Mammary epithelial cell (primary cell): ENCODE measurements at regions of chr1 and their contacts with region 1.

Region 1: DNA sequence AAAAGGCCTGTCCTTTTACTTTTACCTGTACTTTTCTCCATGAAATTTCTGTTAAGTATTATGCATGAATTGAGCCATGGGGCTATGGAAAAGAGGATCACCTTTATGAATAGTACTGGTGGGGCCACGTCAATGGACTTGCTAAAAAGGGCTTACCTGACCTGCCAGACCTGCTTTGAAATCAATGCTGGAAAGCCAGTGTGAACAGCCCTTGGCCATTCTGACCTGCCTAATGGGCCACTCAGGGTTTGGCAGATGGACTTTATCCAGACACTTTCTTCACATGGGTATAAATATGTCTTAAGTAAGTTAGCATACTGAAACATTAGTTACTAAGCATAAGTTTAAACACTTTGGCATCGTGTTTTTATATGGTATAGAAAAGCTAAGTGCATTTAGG is 8.3 kb upstream of the GUK1 start:
- DNase-seq: no peak
- H3K4me3 ChIP-seq: no peak overlapping the region
- H3K27ac ChIP-seq: peak overlapping the region; percentile 9
- H3K4me1 ChIP-seq: peaks cover 11% of the 10 kb centered on the region
- H3K27me3 ChIP-seq: no peaks in the 10 kb centered on the region
- CTCF ChIP-seq: no peak

Region 2: GRCh38 chr1:228109073-228109961 is 22.4 kb before region 1 on chr1 and contains the start of gene MRPL55:
- CTCF ChIA-PET with region 1: interaction called, 5 read pairs
- dilution Hi-C with region 1: no loop called
- in situ Hi-C with region 1: no loop called
- intact Hi-C with region 1: loop called (anchors 1 kb)
- DNase-seq: peak; percentile 95
- H3K4me3 ChIP-seq: peak within 1 kb of the TSS; percentile 73 to 99 (median 80)
- H3K27ac ChIP-seq: peak within 1 kb of the TSS; percentile 66
- H3K4me1 ChIP-seq: peaks cover 14% of the 10 kb centered on the region
- H3K27me3 ChIP-seq: no peaks in the 10 kb centered on the region
- CTCF ChIP-seq: peak in 1 of 2 donors; percentile 10
- total RNA-seq, gene MRPL55: 37.7 to 42.3 TPM

Region 3: DNA sequence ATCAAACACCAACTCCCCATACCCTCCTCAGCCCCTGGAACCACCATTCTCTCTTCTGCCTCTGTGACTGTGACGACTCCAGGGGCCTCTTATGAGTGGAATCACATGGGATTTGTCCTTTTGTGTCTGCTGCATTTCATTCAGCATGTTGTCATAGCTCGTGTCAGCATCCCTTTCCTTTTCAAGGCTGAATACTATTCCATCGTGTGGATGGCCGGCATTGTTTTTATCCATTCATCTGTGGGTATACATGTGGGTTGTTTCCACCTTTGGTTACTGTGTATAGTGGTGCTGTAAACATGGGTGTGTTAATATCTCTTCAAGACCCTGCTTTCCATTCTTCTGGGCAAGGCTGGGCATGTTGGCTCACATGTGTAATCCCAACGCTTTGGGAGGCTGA is 59.0 kb after region 1 on chr1:
- CTCF ChIA-PET with region 1: no interaction called
- dilution Hi-C with region 1: no loop called
- in situ Hi-C with region 1: no loop called
- intact Hi-C with region 1: loop called (anchors 1 kb)
- DNase-seq: no peak
- H3K4me3 ChIP-seq: no peak overlapping the region
- H3K27ac ChIP-seq: no peak overlapping the region
- H3K4me1 ChIP-seq: no peaks in the 10 kb centered on the region
- H3K27me3 ChIP-seq: no peaks in the 10 kb centered on the region
- CTCF ChIP-seq: no peak

Region 4: DNA sequence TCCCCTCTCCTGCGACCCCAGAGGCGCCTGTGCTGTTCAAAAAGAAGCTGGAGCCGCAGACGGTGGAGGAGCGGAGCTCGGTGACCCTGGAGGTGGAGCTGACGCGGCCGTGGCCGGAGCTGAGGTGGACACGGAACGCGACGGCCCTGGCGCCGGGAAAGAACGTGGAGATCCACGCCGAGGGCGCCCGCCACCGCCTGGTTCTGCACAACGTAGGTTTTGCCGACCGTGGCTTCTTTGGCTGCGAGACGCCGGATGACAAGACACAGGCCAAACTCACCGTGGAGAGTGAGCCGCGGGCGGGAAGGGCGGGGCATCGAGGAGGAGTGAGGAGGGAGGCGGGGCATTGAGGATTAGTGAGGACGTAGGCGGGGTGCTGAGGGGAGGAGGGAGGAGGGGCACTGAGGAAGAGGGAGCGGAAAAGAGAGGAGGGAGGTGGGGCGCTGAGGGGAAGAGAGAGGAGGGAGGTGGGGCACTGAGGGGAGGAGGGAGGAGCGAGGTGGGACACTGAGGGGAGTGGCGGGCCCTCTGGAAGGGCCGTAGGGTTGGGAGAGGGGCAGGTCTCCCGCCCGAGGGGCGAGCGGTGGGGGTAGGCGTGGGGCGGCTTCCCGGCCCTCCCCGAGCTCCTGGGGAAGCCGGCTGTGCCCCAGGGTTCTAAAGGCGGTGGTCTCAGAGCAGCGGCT is 144.1 kb after region 1 on chr1:
- CTCF ChIA-PET with region 1: no interaction called
- dilution Hi-C with region 1: no loop called
- in situ Hi-C with region 1: no loop called
- intact Hi-C with region 1: loop called (anchors 2 kb)
- DNase-seq: peak; percentile 63
- H3K4me3 ChIP-seq: peak overlapping the region; percentile 21 to 58 (median 54)
- H3K27ac ChIP-seq: no peak overlapping the region
- H3K4me1 ChIP-seq: peaks cover 9% of the 10 kb centered on the region
- H3K27me3 ChIP-seq: no peaks in the 10 kb centered on the region
- CTCF ChIP-seq: no peak

Region 5: GRCh38 chr1:228393248-228393699 is 261.5 kb after region 1 on chr1:
- CTCF ChIA-PET with region 1: no interaction called
- dilution Hi-C with region 1: no loop called
- in situ Hi-C with region 1: no loop called
- intact Hi-C with region 1: loop called (anchors 1 kb)
- DNase-seq: no peak
- H3K4me3 ChIP-seq: no peak overlapping the region
- H3K27ac ChIP-seq: no peak overlapping the region
- H3K4me1 ChIP-seq: no peaks in the 10 kb centered on the region
- H3K27me3 ChIP-seq: no peaks in the 10 kb centered on the region
- CTCF ChIP-seq: peak; percentile 39 to 72

Region 6: GRCh38 chr1:228457396-228458176 is 325.8 kb after region 1 on chr1:
- CTCF ChIA-PET with region 1: no interaction called
- dilution Hi-C with region 1: no loop called
- in situ Hi-C with region 1: loop called in 1 of 2 experiments (anchors 10 kb)
- intact Hi-C with region 1: loop called (anchors 1 kb)
- DNase-seq: peak; percentile 98
- H3K4me3 ChIP-seq: peak overlapping the region; percentile 69 to 78 (median 76)
- H3K27ac ChIP-seq: peak overlapping the region; percentile 59
- H3K4me1 ChIP-seq: peaks cover 30% of the 10 kb centered on the region
- H3K27me3 ChIP-seq: no peaks in the 10 kb centered on the region
- CTCF ChIP-seq: peak in 1 of 2 donors; percentile 48